SK-N-SH (cell line): ENCODE measurements at regions of chr7 and their contacts with region 1.

Region 1: GRCh38 chr7:25894902-25895791 is 256.9 kb upstream of the NFE2L3 start:
- DNase-seq: peak; percentile 86
- H3K4me3 ChIP-seq: peak overlapping the region; percentile 25 to 42; a peak in 3 of 4 replicates
- H3K27ac ChIP-seq: no peak overlapping the region
- H3K4me1 ChIP-seq: peaks cover 0 to 5% of the 10 kb centered on the region in 2 experiments; a peak in 2 of 4 replicates
- H3K27me3 ChIP-seq: peaks cover 5% of the 10 kb centered on the region; the same call in 1 of the 2 replicates
- CTCF ChIP-seq: peak; percentile 66
- EP300 ChIP-seq: no peak
- RAD21 ChIP-seq: peak; percentile 35

Region 2: GRCh38 chr7:25707768-25708620 is 187.2 kb before region 1 on chr7:
- CTCF ChIA-PET with region 1: no interaction called
- POLR2A ChIA-PET with region 1: no interaction called
- DNase-seq: peak; percentile 53
- H3K4me3 ChIP-seq: no peak overlapping the region
- H3K27ac ChIP-seq: no peak overlapping the region
- H3K4me1 ChIP-seq: peaks cover 0 to 5% of the 10 kb centered on the region in 2 experiments; a peak in 1 of 4 replicates
- H3K27me3 ChIP-seq: no peaks in the 10 kb centered on the region
- CTCF ChIP-seq: no peak
- EP300 ChIP-seq: no peak
- RAD21 ChIP-seq: peak; percentile 11; the same call in 1 of the 2 replicates

Region 3: GRCh38 chr7:25908154-25908949 is 13.2 kb after region 1 on chr7:
- CTCF ChIA-PET with region 1: interaction called, 91 read pairs
- POLR2A ChIA-PET with region 1: no interaction called
- DNase-seq: no peak
- H3K4me3 ChIP-seq: no peak overlapping the region
- H3K27ac ChIP-seq: no peak overlapping the region
- H3K4me1 ChIP-seq: no peaks in the 10 kb centered on the region
- H3K27me3 ChIP-seq: no peaks in the 10 kb centered on the region
- CTCF ChIP-seq: no peak
- EP300 ChIP-seq: no peak
- RAD21 ChIP-seq: no peak

Region 4: GRCh38 chr7:25949736-25950487 is 54.8 kb after region 1 on chr7:
- CTCF ChIA-PET with region 1: interaction called, 23 read pairs
- POLR2A ChIA-PET with region 1: no interaction called
- DNase-seq: no peak
- H3K4me3 ChIP-seq: peak overlapping the region in 1 of 2 experiments; percentile 58; a peak in 2 of 4 replicates
- H3K27ac ChIP-seq: no peak overlapping the region
- H3K4me1 ChIP-seq: peaks cover 0 to 11% of the 10 kb centered on the region in 2 experiments; a peak in 1 of 4 replicates
- H3K27me3 ChIP-seq: peaks cover 40% of the 10 kb centered on the region
- CTCF ChIP-seq: no peak
- EP300 ChIP-seq: no peak
- RAD21 ChIP-seq: no peak

Region 5: GRCh38 chr7:26085781-26086180 is 190.6 kb after region 1 on chr7:
- CTCF ChIA-PET with region 1: interaction called, 75 read pairs
- POLR2A ChIA-PET with region 1: no interaction called
- DNase-seq: no peak
- H3K4me3 ChIP-seq: no peak overlapping the region
- H3K27ac ChIP-seq: no peak overlapping the region
- H3K4me1 ChIP-seq: peaks cover 3 to 6% of the 10 kb centered on the region in 2 experiments; a peak in 2 of 4 replicates
- H3K27me3 ChIP-seq: 0 out of 2 replicates have a peak, but pooled peaks cover 13% of the 10 kb centered on the region
- CTCF ChIP-seq: no peak
- EP300 ChIP-seq: no peak
- RAD21 ChIP-seq: no peak

Region 6: DNA sequence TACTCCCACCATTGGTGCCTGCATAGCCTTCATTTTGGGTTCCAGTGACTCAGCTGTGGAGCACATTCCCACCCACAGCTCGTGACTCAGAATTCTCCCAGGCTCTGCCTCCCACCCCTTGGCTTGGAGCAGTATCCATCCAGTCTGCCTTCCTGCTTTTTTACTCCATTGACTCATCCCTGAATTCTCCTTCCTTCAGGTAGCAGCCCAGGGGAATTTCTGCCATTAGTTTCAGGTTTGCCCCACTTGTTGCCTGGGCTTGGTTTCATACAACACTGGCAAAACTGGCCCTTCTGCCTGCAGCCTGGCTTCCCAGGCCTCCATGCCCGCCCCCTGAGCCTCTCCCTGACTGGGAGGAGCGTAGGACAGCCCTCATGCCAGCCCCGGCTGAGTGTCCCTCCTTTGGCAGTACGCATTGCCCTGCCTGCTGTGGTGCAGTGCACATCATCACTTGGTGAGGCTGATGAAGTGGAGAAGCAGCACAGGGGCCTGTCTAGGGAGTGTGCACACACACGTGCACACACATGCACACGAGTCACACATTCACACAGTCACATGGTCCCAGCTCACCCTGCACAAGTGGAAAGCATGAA is 451.6 kb after region 1 on chr7:
- CTCF ChIA-PET with region 1: interaction called, 29 read pairs
- POLR2A ChIA-PET with region 1: no interaction called
- DNase-seq: no peak
- H3K4me3 ChIP-seq: no peak overlapping the region
- H3K27ac ChIP-seq: no peak overlapping the region
- H3K4me1 ChIP-seq: peaks cover 0 to 3% of the 10 kb centered on the region in 2 experiments; a peak in 2 of 4 replicates
- H3K27me3 ChIP-seq: no peaks in the 10 kb centered on the region
- CTCF ChIP-seq: no peak
- EP300 ChIP-seq: no peak
- RAD21 ChIP-seq: no peak

Region 7: DNA sequence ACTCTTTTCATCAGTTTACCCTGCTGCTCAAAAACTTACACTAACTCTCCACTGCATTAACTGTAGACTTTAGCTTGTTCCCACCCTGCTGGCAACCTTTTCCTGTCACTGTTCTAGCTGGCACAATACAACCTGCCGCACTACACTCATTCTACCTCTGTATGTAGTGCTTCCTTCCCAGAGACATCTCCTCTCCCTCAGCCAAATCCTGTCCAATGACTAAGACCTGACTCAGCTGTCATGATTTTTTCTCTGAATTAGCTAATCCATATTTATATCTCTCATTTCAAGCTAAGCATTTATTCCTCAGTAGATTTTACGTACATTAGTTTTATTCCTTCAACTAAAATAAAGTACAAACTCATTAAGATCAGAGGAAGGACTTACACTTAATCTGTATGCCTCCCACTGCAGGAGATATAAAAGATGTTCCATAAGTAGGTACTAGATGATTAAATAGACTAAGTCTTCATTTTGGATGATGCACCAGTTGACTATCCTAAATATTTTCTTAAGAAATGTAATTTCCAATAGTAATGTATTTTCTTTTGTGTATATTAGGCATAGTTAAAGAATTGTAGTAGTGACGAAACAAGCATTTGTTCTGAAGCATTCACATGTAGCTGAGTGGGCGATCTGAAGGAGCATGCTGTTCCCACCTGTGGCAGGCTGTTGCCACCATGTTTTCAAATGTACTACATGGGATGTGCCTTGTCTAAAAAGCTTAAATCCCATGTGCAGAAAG is 780.2 kb after region 1 on chr7:
- CTCF ChIA-PET with region 1: interaction called, 131 read pairs
- POLR2A ChIA-PET with region 1: no interaction called
- DNase-seq: no peak
- H3K4me3 ChIP-seq: no peak overlapping the region
- H3K27ac ChIP-seq: no peak overlapping the region
- H3K4me1 ChIP-seq: no peaks in the 10 kb centered on the region; a peak in 1 of 4 replicates
- H3K27me3 ChIP-seq: no peaks in the 10 kb centered on the region
- CTCF ChIP-seq: no peak
- EP300 ChIP-seq: no peak
- RAD21 ChIP-seq: no peak